Activated T-helper 2 cell treated with anti-CD3 and anti-CD28 coated beads, Interferon-gamma antibody, Interleukin-2, Interleukin-4, amounts not matched to agents 10 μg/mL and 5 μg/mL and 100 μg/mL, durations not matched to agents 14 hours and 24 hours and 36 hours (primary cell): ENCODE measurements at regions of chr3 and their contacts with region 1.

Region 1: GRCh38 chr3:176872771-176873209 is 324.5 kb downstream of the TBL1XR1 start:
- DNase-seq: peak; percentile 24
- H3K4me3 Mint-ChIP-seq: no peak overlapping the region
- H3K27ac Mint-ChIP-seq: no peak overlapping the region
- H3K4me1 Mint-ChIP-seq: no peaks in the 10 kb centered on the region
- H3K27me3 Mint-ChIP-seq: peaks cover 2% of the 10 kb centered on the region

Region 2: GRCh38 chr3:176939022-176939817 is 66.4 kb after region 1 on chr3:
- intact Hi-C with region 1: loop called (anchors 1 kb)
- DNase-seq: peak; percentile 10
- H3K4me3 Mint-ChIP-seq: no peak overlapping the region
- H3K27ac Mint-ChIP-seq: no peak overlapping the region
- H3K4me1 Mint-ChIP-seq: no peaks in the 10 kb centered on the region
- H3K27me3 Mint-ChIP-seq: peaks cover 10% of the 10 kb centered on the region

Region 3: DNA sequence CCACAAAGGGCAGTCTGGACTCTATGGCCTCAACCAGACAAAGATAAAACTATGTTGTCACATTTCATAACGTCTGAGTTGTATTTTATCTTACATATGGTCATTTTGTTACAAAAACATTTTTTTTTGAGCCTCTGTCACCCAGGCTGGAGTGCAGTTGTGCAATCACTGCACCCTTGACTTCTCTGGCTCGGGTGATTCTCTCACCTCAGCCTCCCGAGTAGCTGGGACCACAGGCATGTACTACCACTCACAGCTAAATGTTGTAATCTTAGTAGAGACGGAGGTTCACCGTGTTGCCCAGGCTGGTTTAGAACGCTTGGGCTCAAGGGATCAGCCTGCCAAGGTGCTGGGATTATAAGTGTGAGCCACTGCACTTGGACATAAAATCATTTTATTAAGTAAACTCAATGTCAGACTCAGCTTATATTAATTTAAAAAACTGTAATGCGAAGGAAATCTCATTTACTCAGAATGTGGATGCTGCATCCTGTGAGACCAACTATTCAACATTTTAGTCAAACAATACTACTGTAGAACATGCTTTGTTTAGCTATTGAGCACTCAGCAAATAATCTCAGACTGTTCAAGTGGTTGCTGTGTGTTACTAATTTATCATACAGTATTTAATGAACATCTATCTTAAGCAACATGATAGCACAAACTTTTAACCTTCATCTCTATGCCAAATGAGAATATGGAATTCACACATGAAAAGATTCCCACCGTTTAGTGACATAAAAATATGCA is 115.3 kb after region 1 on chr3:
- intact Hi-C with region 1: no loop called
- DNase-seq: no peak
- H3K4me3 Mint-ChIP-seq: no peak overlapping the region
- H3K27ac Mint-ChIP-seq: no peak overlapping the region
- H3K4me1 Mint-ChIP-seq: peaks cover 3% of the 10 kb centered on the region
- H3K27me3 Mint-ChIP-seq: no peaks in the 10 kb centered on the region

Region 4: GRCh38 chr3:177300039-177300833 is 427.4 kb after region 1 on chr3:
- intact Hi-C with region 1: no loop called
- DNase-seq: no peak
- H3K4me3 Mint-ChIP-seq: no peak overlapping the region
- H3K27ac Mint-ChIP-seq: no peak overlapping the region
- H3K4me1 Mint-ChIP-seq: peaks cover 2% of the 10 kb centered on the region
- H3K27me3 Mint-ChIP-seq: no peaks in the 10 kb centered on the region

Region 5: DNA sequence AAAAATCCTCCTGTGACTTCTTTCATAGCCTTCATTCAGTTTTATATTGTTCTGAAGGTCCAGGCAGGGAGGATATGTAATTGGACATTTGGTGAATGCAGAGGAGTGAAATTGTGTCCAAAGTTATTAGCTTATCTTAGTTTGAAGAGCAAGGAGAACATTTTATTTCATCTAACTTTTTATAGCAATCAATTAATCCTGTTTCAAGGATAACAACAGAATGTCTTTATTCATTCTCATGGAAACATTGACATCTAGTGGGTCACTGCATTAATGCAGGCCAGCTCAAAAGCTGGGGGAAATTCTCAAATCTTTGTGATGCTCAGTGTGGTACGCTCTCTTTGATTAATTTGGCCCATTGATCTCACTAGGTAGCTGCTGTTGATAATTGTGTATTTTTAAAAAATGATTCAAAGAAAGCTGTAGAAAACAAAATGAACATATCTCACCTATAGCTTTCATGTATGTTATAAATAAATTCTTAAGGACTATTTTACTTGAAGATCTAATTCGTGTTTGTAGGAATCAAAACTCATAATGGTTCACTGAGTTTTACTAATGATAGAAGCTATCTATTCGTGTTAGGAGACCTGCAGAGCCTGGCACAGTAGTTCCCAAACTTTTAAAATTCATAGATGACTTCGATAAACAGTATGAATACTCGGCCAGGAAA is 1512.6 kb after region 1 on chr3:
- intact Hi-C with region 1: loop called (anchors 2 kb)
- DNase-seq: no peak
- H3K4me3 Mint-ChIP-seq: no peak overlapping the region
- H3K27ac Mint-ChIP-seq: no peak overlapping the region
- H3K4me1 Mint-ChIP-seq: no peaks in the 10 kb centered on the region
- H3K27me3 Mint-ChIP-seq: peaks cover 3% of the 10 kb centered on the region